ENCODE measurements at regions of chr2 and their contacts with region 1.

Region 1: GRCh38 chr2:197191177-197191939 is 119.2 kb downstream of the ANKRD44 start:
- DNase-seq: no peak
- H3K4me3 ChIP-seq: no peak overlapping the region
- H3K27ac ChIP-seq: no peak overlapping the region
- H3K4me1 ChIP-seq: peaks cover 6 to 18% of the 10 kb centered on the region in 2 donors
- H3K27me3 ChIP-seq: no peaks in the 10 kb centered on the region
- CTCF ChIP-seq: peak; percentile 62 to 90 (median 73)
- POLR2A ChIP-seq: no peak

Region 2: DNA sequence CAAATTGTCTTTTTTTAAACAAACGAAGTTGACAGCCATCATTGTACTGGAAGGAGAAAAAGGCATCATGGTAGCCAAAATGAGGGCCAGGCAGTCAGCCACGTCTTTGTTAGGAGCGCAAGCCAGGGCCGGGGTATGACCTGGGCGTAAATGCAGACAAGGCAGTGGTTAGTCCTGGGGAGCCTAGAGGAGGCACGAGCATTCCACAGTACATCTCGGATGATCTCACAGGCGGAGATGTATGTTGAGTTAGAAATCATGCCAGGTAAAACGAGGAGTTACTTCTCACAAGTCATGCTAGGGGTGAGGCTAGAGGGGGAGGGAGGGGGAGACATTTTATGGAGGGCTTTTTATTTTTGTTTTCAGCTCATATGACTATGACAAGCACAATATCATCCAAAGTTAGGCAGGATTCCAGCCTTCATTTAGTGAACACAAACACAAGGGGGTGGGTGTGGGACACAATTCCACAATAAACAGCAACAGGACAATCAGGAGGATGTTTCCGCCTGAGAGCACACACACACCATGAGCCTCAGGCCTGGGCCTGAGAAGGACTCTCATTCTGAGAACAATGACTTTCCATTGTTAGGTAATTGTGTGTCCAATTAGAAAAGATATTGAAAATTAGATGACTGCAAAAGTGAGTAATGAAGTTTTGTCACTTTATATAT is 200.4 kb before region 1 on chr2:
- intact Hi-C with region 1: no loop called
- DNase-seq: no peak
- H3K4me3 ChIP-seq: no peak overlapping the region
- H3K27ac ChIP-seq: no peak overlapping the region
- H3K4me1 ChIP-seq: peaks cover 6 to 29% of the 10 kb centered on the region in 2 donors
- H3K27me3 ChIP-seq: no peaks in the 10 kb centered on the region
- CTCF ChIP-seq: no peak
- POLR2A ChIP-seq: no peak

Region 3: DNA sequence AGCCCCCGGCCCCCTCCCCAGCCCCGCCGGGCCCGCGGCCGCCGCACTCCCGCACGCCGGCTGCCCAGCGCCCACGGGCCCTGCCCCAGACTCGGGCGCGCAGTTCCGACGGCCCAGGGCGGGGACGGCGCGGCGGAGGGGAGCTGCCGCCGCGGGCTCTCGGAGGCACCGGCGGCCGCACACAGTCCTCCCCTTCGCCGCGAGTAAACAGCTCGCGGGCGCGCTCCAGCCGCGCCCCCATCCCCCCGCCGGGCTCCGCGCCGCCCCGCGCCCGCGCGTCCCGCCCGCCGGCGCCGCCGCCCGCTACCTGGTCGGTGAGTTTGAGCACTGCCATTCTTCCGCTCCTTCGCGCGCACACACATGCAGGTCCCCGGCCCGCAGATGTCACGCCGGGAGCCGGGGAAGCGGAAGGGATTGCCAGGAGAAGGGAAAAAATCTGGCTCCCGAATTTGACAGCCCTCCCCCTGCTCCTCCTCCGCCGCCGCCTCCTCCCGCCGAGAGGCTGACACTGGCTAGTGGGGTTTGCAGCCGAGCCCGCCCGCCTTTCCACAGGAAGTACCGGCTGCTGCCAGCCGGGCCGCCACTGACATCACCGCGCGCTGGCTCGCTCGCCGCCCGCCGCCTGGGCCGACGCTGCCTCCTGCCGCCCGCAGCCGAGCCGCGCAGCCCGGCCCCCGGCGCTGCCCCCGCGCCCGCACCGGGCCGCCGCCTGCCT is 119.1 kb after region 1 on chr2 and contains the start of gene ANKRD44:
- intact Hi-C with region 1: loop called (anchors 2 to 5 kb)
- DNase-seq: peak; percentile 92 to 96 (median 95)
- H3K4me3 ChIP-seq: peak within 1 kb of the TSS; percentile 1 to 90 (median 56)
- H3K27ac ChIP-seq: peak within 1 kb of the TSS in 3 of 5 donors; percentile 79 to 96 (median 82)
- H3K4me1 ChIP-seq: peaks cover 9 to 37% of the 10 kb centered on the region in 2 donors
- H3K27me3 ChIP-seq: no peaks in the 10 kb centered on the region
- CTCF ChIP-seq: peak in 5 of 6 experiments; percentile 40 to 94 (median 56)
- POLR2A ChIP-seq: peak in 1 of 2 donors; percentile 89
- total RNA-seq, gene ANKRD44: 12.9 to 40.2 (median 27.0) TPM

Region 4: GRCh38 chr2:197378494-197379307 is 187.3 kb after region 1 on chr2:
- intact Hi-C with region 1: loop called (anchors 5 kb)
- DNase-seq: peak; percentile 23 to 61 (median 40)
- H3K4me3 ChIP-seq: no peak overlapping the region
- H3K27ac ChIP-seq: no peak overlapping the region
- H3K4me1 ChIP-seq: no peaks in the 10 kb centered on the region
- H3K27me3 ChIP-seq: no peaks in the 10 kb centered on the region
- CTCF ChIP-seq: peak; percentile 43 to 84 (median 79)
- POLR2A ChIP-seq: no peak

Region 5: GRCh38 chr2:197647961-197648690 is 456.8 kb after region 1 on chr2:
- intact Hi-C with region 1: no loop called
- DNase-seq: no peak
- H3K4me3 ChIP-seq: no peak overlapping the region
- H3K27ac ChIP-seq: no peak overlapping the region
- H3K4me1 ChIP-seq: no peaks in the 10 kb centered on the region
- H3K27me3 ChIP-seq: no peaks in the 10 kb centered on the region
- CTCF ChIP-seq: no peak
- POLR2A ChIP-seq: no peak